ENCODE measurements at regions of chr9 and their contacts with region 1.

Region 1: DNA sequence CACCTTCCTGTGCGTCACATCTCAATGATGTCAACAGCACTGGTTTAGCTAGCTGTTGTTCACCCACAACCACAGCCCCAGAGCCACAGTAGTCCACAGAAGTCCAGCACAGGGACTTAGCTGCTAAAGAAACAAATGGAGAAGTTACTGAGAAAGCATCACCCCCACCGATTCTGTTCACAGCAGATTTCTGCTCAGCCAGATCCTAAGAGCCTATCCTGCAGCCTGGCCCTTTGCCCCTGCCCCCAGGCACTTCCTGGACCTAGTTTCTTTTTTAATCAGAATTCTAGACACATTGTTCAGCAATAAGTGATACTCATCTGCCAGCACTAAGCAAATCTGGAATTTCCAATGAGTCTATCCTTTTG is 7.4 kb downstream of the B4GALT1 start:
- DNase-seq: peak; percentile 50
- ATAC-seq: peak; percentile 3; the same call in 1 of the 2 replicates
- H3K4me3 ChIP-seq: peak overlapping the region; percentile 57
- H3K27ac ChIP-seq: peak overlapping the region; percentile 100
- H3K4me1 ChIP-seq: peaks cover 91% of the 10 kb centered on the region
- H3K27me3 ChIP-seq: no peaks in the 10 kb centered on the region
- CTCF ChIP-seq: no peak

Region 2: DNA sequence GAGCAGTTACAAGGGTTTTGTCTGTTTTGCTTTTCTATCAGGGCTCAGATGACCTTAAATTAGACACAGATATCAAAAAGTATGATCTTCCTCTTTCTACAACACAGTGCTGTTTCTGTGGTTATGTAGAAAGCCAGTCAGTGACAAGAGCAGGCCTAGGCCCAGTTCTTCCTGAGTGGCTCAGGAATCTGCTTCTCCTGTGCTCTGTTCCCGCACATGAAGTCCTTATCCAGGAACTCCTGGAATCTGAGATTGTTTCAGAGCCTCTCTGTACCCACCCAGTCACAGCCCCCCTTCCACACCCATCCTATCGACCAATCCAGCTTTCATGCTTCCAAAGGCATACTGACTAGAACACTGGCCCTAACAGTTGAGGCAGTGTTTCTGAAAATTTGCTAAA is 42.9 kb before region 1 on chr9:
- CTCF ChIA-PET with region 1: no interaction called
- POLR2A ChIA-PET with region 1: no interaction called
- intact Hi-C with region 1: loop called (anchors 5 kb)
- DNase-seq: no peak
- ATAC-seq: no peak
- H3K4me3 ChIP-seq: no peak overlapping the region
- H3K27ac ChIP-seq: 0 out of 2 replicates have a peak overlapping the region, but pooled peaks have one; percentile 18
- H3K4me1 ChIP-seq: peaks cover 15% of the 10 kb centered on the region
- H3K27me3 ChIP-seq: no peaks in the 10 kb centered on the region
- CTCF ChIP-seq: no peak